ENCODE measurements at regions of chr10 and their contacts with region 1.

Region 1: DNA sequence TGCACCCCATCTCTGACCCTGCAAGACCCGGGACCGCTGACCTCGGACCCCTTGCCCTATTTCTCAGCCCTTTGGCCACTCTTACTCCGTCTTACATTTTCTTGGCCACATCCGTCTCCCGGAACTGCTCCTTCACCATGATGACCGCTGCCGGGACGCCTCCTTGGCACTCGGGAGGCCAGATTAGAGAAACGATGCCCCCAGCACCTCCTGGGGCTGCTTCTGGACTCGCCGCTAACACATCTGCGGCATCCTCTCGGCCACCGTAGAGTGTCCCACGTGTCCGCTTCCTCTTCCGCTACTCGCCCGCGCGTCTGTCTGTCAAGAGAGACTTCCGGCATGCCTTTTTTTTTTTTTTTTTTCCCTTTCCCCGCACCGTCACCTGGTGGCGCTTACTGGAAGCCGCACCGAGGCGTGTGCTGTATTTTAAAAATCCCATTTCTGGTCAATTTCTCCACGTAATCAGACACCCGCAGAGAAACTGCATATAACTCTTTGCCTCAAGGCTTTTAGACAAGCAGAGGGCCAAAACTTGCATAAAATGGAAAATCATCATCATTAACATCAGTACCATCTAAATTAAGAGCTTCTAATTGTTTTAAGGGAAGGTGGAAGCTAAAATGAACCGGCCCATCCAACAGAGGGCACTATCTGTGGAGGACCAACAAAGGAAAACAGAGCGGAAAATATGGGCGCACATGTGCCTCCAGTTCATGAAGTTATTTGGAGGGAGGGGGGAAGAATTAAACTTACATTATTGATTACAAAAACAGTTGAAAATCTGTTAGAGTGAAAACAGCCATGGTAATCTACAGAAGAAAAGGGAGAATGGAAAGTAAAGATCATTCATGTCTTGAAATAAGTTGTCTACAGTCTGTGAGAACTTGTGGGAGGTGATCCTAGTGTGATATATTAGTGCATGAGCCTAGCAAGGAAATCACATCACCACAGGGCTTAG is at the start of gene POLR3A:
- DNase-seq: peak; percentile 99
- H3K4me3 ChIP-seq: peak within 1 kb of the TSS; percentile 60 to 98 (median 80)
- H3K27ac ChIP-seq: peak within 1 kb of the TSS; percentile 81 to 88 (median 86)
- H3K4me1 ChIP-seq: peaks cover 0 to 35% (median 24%) of the 10 kb centered on the region in 4 donors
- H3K27me3 ChIP-seq: no peaks in the 10 kb centered on the region
- CTCF ChIP-seq: peak; percentile 78 to 91 (median 80)
- EP300 ChIP-seq: no peak
- POLR2A ChIP-seq: peak; percentile 23 to 33
- total RNA-seq, gene POLR3A: 9.6 to 13.0 (median 11.0) TPM

Region 2: DNA sequence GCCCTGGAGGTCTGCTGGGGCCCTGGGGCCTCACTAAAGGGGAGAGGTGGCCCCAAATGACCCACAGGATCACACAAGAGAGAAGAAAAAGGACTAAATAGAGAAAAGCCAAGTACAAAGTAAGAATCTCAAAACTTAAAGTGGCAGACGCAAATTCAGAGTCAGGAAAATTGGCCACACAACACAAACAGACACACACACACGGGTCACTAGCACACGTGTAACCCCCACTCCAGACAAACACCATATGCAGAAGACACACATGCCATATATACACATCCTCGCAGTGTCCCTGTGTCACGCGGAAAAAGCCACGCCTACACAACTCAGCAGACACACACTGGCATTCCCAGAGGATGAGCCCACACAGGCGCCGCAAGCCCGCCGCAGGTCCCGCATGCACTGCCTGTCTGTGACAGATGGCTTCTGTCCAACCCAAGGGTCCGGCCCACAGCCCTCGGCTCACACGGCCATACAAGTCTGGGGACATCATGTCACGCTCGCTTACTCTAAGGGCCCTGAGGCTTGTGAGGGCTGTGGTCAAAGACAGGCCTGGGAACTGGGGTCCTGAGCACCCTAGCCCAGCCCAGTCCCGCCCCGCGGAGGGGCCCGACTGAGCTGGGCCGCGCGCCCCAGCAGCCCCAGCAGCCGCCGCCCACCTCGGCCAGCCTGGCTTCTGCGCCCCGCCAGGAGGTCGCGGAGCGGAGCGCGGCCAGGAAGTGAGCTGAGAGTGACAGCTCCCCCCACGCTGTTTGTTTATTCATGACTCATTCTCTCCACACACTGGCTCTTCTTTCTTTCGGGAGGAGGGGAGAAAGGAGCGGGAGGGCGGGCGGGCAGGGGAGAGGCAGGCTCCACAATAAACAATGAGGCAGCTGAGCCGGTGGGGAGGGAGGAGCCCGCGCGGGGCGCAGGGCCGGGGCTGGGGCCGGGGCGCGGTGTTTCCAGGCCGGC is 943.7 kb after region 1 on chr10:
- intact Hi-C with region 1: loop called (anchors 5 kb)
- DNase-seq: peak; percentile 91
- H3K4me3 ChIP-seq: peak overlapping the region; percentile 30 to 57 (median 49)
- H3K27ac ChIP-seq: peak overlapping the region; percentile 94 to 99 (median 96)
- H3K4me1 ChIP-seq: peaks cover 0 to 61% (median 51%) of the 10 kb centered on the region in 4 donors
- H3K27me3 ChIP-seq: no peaks in the 10 kb centered on the region
- CTCF ChIP-seq: peak in 1 of 4 experiments; percentile 10
- EP300 ChIP-seq: peak; percentile 5 to 86 (median 68)
- POLR2A ChIP-seq: peak in 1 of 2 donors; percentile 14

Measured in sigmoid colon (tissue), 7 donors.